ENCODE measurements at regions of chr3 and their contacts with region 1.

Region 1: DNA sequence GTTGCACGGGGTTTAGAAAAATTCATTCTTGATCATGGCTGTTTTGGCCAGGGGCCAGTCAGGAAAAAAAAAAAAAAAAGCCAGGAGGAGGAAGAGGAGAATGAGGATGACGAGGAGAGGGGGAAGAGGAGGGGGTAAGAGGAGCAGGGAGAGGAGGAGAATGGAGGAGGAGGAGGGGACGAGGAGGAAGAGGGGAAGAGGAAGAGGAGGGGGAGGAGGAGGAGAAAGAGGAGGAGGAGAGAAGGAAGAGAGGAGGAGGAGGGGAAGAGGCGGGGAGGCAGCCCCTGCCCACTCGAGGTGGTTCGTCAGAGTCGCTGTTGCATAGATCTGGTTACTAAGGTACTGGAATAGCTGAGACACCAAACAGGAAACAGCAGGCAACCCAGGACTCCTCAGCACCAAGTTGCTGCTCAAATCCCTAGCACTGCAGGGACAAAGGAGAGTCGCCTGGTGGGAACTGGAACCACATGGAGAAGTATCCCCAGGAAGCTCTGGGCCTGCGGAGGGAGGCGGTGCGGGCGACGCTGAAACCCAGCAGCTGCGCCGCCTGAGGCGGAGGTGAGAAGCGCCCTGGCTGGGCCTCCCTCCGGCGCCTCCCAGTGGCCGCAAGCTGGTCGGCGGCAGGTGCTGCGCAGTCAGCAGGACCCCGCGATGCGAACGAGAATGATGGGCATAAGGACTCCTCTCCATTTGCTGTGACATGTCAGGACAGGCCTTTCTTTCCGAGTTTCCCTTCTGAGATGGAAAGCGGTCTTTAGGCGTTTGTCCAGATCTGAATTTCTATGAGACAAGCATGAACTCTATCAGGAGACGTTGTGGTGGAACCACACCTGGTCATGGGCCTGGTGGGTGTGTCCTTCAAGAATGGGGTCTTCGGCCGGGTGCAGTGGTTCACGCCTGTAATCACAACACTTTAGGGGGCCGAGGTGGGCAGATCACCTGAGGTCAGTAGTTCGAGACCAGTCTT is 17.5 kb downstream of the FAM240A start:
- DNase-seq: peak; percentile 67 to 87
- H3K4me3 ChIP-seq: peak overlapping the region; percentile 31 to 47
- H3K27ac ChIP-seq: peak overlapping the region; percentile 31 to 39
- H3K4me1 ChIP-seq: peaks cover 0 to 13% (median 10%) of the 10 kb centered on the region in 4 donors
- H3K27me3 ChIP-seq: peaks cover 0 to 3% of the 10 kb centered on the region in 2 donors
- CTCF ChIP-seq: peak; percentile 92 to 98

Region 2: DNA sequence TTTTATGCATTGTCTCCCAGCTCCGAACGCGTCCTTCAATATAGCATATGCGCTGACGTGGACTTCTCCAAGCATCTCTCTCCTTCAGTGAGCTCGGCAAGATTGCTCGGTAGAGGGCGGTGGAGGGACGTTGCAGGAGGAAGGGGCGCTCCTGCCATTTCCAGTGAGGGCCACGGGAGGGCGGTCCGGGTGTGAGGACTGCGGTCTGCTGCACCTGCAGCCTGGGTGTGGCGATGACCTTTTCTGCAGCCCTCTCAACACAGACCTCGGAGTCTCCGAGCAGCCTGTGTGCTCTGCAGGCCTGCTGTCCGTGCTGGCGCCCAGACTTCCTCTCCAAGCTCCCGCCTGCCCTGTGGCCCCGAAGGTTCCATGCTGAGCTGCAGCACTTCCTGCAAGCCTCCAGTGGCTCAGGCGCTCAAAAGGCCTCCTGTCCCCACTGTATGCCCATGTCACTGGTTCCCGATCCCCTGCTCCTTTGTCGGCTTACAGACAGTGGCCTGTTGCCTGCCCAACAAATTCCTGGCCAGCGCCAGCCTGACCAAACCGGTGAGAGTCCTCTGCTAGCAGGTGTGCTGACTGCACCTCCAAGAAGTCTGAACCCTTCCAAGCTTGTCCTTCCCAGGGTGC is 141.0 kb before region 1 on chr3:
- intact Hi-C with region 1: loop called (anchors 10 kb)
- DNase-seq: peak; percentile 85 to 89
- H3K4me3 ChIP-seq: no peak overlapping the region
- H3K27ac ChIP-seq: no peak overlapping the region
- H3K4me1 ChIP-seq: peaks cover 0 to 4% (median 0%) of the 10 kb centered on the region in 4 donors
- H3K27me3 ChIP-seq: peaks cover 0 to 13% of the 10 kb centered on the region in 2 donors
- CTCF ChIP-seq: peak; percentile 76 to 77

Region 3: GRCh38 chr3:46663591-46664135 is 33.8 kb after region 1 on chr3:
- intact Hi-C with region 1: no loop called
- DNase-seq: no peak
- H3K4me3 ChIP-seq: no peak overlapping the region
- H3K27ac ChIP-seq: no peak overlapping the region
- H3K4me1 ChIP-seq: peaks cover 0 to 24% (median 0%) of the 10 kb centered on the region in 4 donors
- H3K27me3 ChIP-seq: peaks cover 0 to 12% of the 10 kb centered on the region in 2 donors
- CTCF ChIP-seq: no peak

Measured in tibial artery (tissue), 4 donors.